ENCODE measurements at regions of chr9 and their contacts with region 1.

Region 1: GRCh38 chr9:32579706-32580331 is 6.9 kb upstream of the NDUFB6 start:
- DNase-seq: peak; percentile 83
- H3K4me3 Mint-ChIP-seq: no peak overlapping the region
- H3K27ac Mint-ChIP-seq: no peak overlapping the region
- H3K4me1 Mint-ChIP-seq: peaks cover 1% of the 10 kb centered on the region
- H3K27me3 Mint-ChIP-seq: peaks cover 12% of the 10 kb centered on the region

Region 2: DNA sequence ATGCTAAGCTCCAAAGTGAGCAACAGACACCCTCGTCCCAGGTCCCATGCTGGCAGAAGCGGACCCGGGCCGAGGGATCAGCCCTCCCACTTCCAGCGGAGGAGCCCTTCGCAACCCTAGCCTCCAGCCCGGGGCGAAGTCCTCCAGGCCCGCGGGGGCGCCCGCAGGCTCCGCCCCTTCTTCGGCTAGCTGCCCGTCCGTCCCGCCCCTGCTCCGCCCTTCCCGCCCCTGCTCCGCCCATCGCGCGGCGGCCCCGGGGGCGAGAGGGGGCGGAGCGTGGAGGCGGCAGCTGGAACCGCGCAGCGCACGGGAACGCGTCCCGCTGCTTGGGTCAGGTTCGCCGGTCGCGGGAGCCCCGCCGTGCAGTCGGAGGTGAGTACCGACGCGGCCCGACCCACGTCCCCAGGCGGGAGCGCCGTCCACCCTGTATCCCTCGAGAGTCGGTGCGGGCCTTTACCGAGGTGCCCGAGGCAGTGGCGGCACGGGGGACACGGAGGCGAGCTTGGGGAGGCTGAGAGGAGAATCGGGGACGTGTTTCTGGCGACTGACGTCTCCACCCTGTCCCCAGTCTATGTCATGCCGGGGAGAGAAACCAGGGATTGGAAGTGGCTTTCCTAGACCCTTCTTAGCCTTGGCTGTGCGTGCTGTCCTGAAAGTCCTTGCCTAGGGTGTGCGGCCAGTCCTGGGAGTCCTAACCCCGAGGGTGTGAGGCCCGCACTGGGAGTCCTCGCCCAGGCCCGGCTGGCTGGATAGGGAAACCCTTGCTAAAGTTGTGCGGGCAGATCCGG is 195.3 kb before region 1 on chr9 and contains the start of gene ACO1:
- CTCF ChIA-PET with region 1: interaction called, 94 read pairs
- POLR2A ChIA-PET with region 1: no interaction called
- DNase-seq: peak; percentile 84
- H3K4me3 Mint-ChIP-seq: peak within 1 kb of the TSS; percentile 77
- H3K27ac Mint-ChIP-seq: peak within 1 kb of the TSS; percentile 67
- H3K4me1 Mint-ChIP-seq: peaks cover 20% of the 10 kb centered on the region
- H3K27me3 Mint-ChIP-seq: peaks cover 31% of the 10 kb centered on the region
- total RNA-seq, gene ACO1: 8.1 to 8.6 TPM

Region 3: GRCh38 chr9:32487981-32488380 is 91.8 kb before region 1 on chr9:
- CTCF ChIA-PET with region 1: no interaction called
- POLR2A ChIA-PET with region 1: no interaction called
- DNase-seq: no peak
- H3K4me3 Mint-ChIP-seq: no peak overlapping the region
- H3K27ac Mint-ChIP-seq: no peak overlapping the region
- H3K4me1 Mint-ChIP-seq: no peaks in the 10 kb centered on the region
- H3K27me3 Mint-ChIP-seq: no peaks in the 10 kb centered on the region

Region 4: DNA sequence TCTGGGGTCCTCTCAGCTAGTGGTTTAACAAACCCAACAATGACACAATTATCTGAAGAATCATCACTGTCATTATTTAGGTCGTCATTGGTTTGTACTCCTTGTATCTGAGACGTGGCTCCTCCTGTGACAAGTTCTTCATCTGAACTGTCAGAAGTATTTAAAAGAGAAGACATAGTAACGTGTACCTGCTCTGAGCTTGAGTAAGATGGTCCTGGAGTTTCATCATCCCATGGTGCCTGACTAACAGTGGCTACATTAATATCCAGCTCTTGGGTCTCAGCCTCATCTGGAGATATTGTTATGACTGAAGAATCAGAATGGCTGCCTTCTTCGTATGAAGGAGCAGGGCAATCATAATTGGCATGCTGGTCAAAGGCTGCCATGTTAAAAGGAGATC is 36.8 kb before region 1 on chr9:
- CTCF ChIA-PET with region 1: no interaction called
- POLR2A ChIA-PET with region 1: no interaction called
- DNase-seq: no peak
- H3K4me3 Mint-ChIP-seq: no peak overlapping the region
- H3K27ac Mint-ChIP-seq: no peak overlapping the region
- H3K4me1 Mint-ChIP-seq: peaks cover 5% of the 10 kb centered on the region
- H3K27me3 Mint-ChIP-seq: no peaks in the 10 kb centered on the region